Endothelial cell of umbilical vein (primary cell): ENCODE measurements at regions of chr14 and their contacts with region 1.

Region 1: GRCh38 chr14:50714450-50715073 is 46.5 kb upstream of the SAV1 start:
- DNase-seq: peak; percentile 60
- H3K4me3 ChIP-seq: no peak overlapping the region
- H3K27ac ChIP-seq: no peak overlapping the region
- H3K4me1 ChIP-seq: no peaks in the 10 kb centered on the region
- H3K27me3 ChIP-seq: no peaks in the 10 kb centered on the region
- CTCF ChIP-seq: peak; percentile 38 to 63
- POLR2A ChIP-seq: no peak

Region 2: DNA sequence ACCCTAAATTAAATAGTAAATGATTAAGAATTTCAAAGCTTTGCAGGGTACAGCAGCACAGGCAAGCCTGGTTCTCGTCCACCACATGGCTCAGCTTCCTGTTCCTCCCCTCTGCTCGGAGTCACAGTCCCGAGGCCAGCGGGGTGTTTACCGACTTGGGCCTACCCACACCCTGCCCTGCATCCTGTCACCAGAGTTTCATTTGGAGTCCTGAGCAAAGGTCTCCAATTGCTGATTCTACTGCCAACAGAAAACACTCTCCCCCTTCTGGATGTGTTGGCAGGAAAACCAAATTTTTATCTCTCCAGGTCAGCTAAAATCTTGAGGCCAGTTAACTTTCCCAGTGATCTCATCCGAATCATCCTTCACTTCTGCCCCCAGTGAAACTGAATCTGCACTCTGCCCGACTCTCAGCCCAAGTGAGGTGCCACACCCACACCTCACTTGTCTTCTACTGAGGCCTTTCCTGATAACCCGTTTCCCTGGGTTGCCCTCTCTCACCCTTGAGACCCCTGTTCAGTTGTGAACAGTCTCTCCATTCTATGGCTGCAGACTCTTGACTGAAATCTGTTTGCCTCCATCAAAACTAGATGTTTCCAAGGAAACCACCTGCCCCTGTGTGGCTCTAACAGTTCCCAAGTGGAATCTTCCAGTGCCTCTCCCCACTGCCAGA is 669.4 kb before region 1 on chr14:
- CTCF ChIA-PET with region 1: no interaction called
- POLR2A ChIA-PET with region 1: no interaction called
- dilution Hi-C with region 1: no loop called
- intact Hi-C with region 1: no loop called
- DNase-seq: peak; percentile 69
- H3K4me3 ChIP-seq: no peak overlapping the region
- H3K27ac ChIP-seq: no peak overlapping the region
- H3K4me1 ChIP-seq: peaks cover 35% of the 10 kb centered on the region
- H3K27me3 ChIP-seq: no peaks in the 10 kb centered on the region
- CTCF ChIP-seq: no peak
- POLR2A ChIP-seq: no peak

Region 3: GRCh38 chr14:50354527-50354926 is 360.0 kb before region 1 on chr14:
- CTCF ChIA-PET with region 1: no interaction called
- POLR2A ChIA-PET with region 1: no interaction called
- dilution Hi-C with region 1: no loop called
- intact Hi-C with region 1: no loop called
- DNase-seq: no peak
- H3K4me3 ChIP-seq: no peak overlapping the region
- H3K27ac ChIP-seq: no peak overlapping the region
- H3K4me1 ChIP-seq: peaks cover 10% of the 10 kb centered on the region
- H3K27me3 ChIP-seq: no peaks in the 10 kb centered on the region
- CTCF ChIP-seq: no peak
- POLR2A ChIP-seq: no peak

Region 4: DNA sequence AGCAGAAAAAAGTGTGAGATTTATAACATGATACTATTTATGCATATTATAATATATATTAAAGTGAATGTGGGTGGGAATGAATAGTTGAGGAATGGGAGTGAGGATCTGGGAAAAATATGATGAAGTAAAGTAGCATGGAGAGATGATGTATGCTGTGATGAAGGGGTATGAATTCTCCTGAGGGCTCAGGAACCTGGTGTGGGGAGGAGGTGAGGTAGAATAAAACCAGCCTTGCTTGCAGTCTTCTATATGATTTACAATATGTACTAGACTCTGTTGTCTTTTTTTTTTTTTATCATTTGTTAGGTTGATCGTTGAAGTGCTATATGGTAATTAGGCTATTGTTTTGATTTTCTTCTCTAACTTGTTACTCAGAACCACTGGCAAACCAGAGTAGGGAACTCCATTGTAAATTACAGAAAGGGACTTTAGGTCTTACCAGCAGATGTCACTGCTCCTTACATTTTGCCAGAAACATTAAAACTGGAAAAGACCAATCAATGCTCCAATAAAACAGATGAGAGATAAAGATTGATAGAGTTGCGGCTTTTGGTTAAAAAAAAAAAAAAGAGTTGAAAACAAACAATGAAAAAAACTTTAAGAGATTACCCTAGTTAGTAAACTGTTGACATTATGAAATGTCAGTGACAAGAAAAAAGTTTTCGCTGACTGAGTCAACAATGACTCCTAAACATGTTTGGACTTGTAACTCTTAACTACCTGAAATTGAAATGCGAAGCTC is 114.7 kb before region 1 on chr14:
- CTCF ChIA-PET with region 1: interaction called, 76 read pairs
- POLR2A ChIA-PET with region 1: no interaction called
- dilution Hi-C with region 1: no loop called
- intact Hi-C with region 1: loop called (anchors 1 kb)
- DNase-seq: peak; percentile 68
- H3K4me3 ChIP-seq: no peak overlapping the region
- H3K27ac ChIP-seq: no peak overlapping the region
- H3K4me1 ChIP-seq: peaks cover 3% of the 10 kb centered on the region
- H3K27me3 ChIP-seq: no peaks in the 10 kb centered on the region
- CTCF ChIP-seq: peak; percentile 35 to 46
- POLR2A ChIP-seq: no peak

Region 5: DNA sequence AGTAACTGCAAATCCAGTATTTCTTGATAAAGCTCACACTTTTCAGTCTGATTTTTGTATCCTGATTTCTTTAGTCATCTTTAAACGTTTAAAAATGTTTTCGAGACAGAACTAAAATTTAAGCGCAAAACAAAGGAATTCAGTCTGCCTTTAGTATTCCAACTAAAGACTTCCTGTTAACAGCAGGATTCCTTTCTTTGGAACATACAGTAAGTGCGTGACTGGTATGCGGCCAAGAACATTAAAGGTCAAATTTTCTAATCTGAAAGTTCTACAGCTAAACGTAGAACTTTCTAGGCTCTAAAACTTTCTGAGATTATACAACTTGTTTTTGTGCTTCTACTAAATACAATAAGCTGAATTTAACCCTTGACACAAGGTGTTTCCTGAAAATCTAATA is 56.4 kb before region 1 on chr14:
- CTCF ChIA-PET with region 1: interaction called, 15 read pairs
- POLR2A ChIA-PET with region 1: no interaction called
- dilution Hi-C with region 1: no loop called
- intact Hi-C with region 1: no loop called
- DNase-seq: peak; percentile 86
- H3K4me3 ChIP-seq: peak overlapping the region in 1 of 3 experiments; percentile 38
- H3K27ac ChIP-seq: peak overlapping the region; percentile 79
- H3K4me1 ChIP-seq: peaks cover 26% of the 10 kb centered on the region
- H3K27me3 ChIP-seq: no peaks in the 10 kb centered on the region
- CTCF ChIP-seq: no peak
- POLR2A ChIP-seq: no peak

Region 6: GRCh38 chr14:50688875-50689274 is 25.7 kb before region 1 on chr14:
- CTCF ChIA-PET with region 1: interaction called, 13 read pairs
- POLR2A ChIA-PET with region 1: no interaction called
- dilution Hi-C with region 1: no loop called
- intact Hi-C with region 1: no loop called
- DNase-seq: no peak
- H3K4me3 ChIP-seq: no peak overlapping the region
- H3K27ac ChIP-seq: no peak overlapping the region
- H3K4me1 ChIP-seq: no peaks in the 10 kb centered on the region
- H3K27me3 ChIP-seq: no peaks in the 10 kb centered on the region
- CTCF ChIP-seq: no peak
- POLR2A ChIP-seq: no peak

Region 7: GRCh38 chr14:50726372-50727107 is 12.0 kb after region 1 on chr14:
- CTCF ChIA-PET with region 1: interaction called, 19 read pairs
- POLR2A ChIA-PET with region 1: no interaction called
- dilution Hi-C with region 1: no loop called
- intact Hi-C with region 1: no loop called
- DNase-seq: no peak
- H3K4me3 ChIP-seq: no peak overlapping the region
- H3K27ac ChIP-seq: no peak overlapping the region
- H3K4me1 ChIP-seq: no peaks in the 10 kb centered on the region
- H3K27me3 ChIP-seq: no peaks in the 10 kb centered on the region
- CTCF ChIP-seq: no peak
- POLR2A ChIP-seq: no peak